ENCODE measurements at regions of chr3 and their contacts with region 1.

Region 1: GRCh38 chr3:152097770-152098169 is 171.0 kb upstream of the MBNL1 start:
- DNase-seq: peak; percentile 58
- H3K4me3 ChIP-seq: no peak overlapping the region
- H3K27ac ChIP-seq: peak overlapping the region; percentile 53 to 87 (median 79)
- H3K4me1 ChIP-seq: peaks cover 0 to 38% (median 24%) of the 10 kb centered on the region in 4 donors
- H3K27me3 ChIP-seq: no peaks in the 10 kb centered on the region
- CTCF ChIP-seq: no peak
- EP300 ChIP-seq: no peak
- POLR2A ChIP-seq: no peak

Region 2: DNA sequence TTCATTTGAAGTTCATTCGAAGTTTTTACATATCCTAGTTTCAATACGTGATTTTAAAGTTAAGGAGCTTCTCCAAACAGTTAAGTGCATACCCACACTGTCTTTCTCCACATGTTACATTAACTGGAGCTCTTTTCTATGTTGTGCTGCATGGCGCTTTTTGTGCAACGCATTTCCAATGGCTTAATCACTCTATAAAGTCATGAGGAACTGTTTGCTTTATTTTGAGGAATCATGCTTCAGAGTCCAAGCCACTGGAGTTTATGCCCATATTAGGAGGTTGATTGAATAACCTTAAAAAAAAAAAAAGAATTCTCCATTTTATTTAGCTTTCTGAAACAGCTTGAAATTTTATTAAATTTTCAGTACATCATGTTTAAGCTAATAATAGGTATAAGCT is 61.6 kb after region 1 on chr3:
- intact Hi-C with region 1: loop called (anchors 5 kb)
- DNase-seq: no peak
- H3K4me3 ChIP-seq: no peak overlapping the region
- H3K27ac ChIP-seq: peak overlapping the region in 3 of 4 donors; percentile 54 to 79 (median 69)
- H3K4me1 ChIP-seq: peaks cover 0 to 60% (median 31%) of the 10 kb centered on the region in 4 donors
- H3K27me3 ChIP-seq: no peaks in the 10 kb centered on the region
- CTCF ChIP-seq: no peak
- EP300 ChIP-seq: peak in 1 of 4 donors; percentile 57
- POLR2A ChIP-seq: no peak

Measured in sigmoid colon (tissue), 7 donors.